ENCODE measurements at regions of chr12 and their contacts with region 1.

Region 1: GRCh38 chr12:48890657-48891418 is 25.2 kb upstream of the RND1 start:
- DNase-seq: peak; percentile 86
- ATAC-seq: peak; percentile 97
- H3K4me3 Mint-ChIP-seq: no peak overlapping the region
- H3K27ac Mint-ChIP-seq: no peak overlapping the region
- H3K4me1 Mint-ChIP-seq: no peaks in the 10 kb centered on the region
- H3K27me3 Mint-ChIP-seq: peaks cover 7% of the 10 kb centered on the region
- CTCF ChIP-seq: peak; percentile 98

Region 2: DNA sequence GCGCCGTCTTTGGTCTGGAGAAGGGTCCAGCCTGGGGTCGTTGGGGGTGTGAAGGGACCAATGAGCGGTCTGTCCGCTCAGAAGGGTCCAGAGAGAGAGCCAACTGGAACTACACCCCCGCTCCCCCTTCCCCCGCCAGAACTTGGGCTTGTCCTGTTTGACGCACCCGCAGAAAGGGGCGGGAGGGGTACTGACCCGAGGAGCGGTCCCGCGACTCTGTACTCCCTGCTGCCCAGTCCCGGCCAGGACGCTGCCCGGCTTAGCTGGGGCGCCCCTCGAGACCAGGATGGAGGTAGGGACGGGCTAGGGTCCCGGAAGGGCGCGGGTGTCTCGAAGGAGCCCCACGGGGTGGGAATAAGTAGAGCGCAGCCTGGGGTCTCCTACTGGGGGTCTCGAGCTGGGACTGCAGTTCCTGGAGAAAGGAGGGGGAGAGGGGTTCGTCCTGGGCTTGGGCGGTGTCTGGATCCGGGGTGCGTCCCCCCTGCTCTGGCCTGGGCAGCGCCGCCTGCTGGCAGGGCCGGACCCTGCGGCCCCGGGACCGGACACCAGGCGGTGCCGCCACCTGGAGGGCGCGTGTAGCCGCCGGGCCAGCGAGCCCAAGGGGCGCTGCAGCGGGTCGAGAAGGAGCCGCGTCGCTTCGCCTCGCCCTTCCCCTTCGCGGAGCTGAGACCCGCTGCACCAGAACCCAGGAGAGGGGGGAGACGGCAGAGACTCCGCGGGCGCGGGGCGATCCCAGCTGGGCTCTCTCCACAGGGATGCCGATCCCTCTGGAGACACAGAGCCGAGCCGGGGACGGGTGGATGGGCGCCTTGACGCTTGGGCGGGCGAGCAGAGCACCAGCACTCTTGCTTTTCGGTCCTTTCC is 76.3 kb before region 1 on chr12:
- CTCF ChIA-PET with region 1: interaction called, 27 read pairs
- POLR2A ChIA-PET with region 1: no interaction called
- intact Hi-C with region 1: no loop called
- DNase-seq: peak; percentile 86
- ATAC-seq: peak; percentile 83
- H3K4me3 Mint-ChIP-seq: peak overlapping the region; percentile 95
- H3K27ac Mint-ChIP-seq: peak overlapping the region; percentile 67
- H3K4me1 Mint-ChIP-seq: peaks cover 34% of the 10 kb centered on the region
- H3K27me3 Mint-ChIP-seq: peaks cover 19% of the 10 kb centered on the region
- CTCF ChIP-seq: peak; percentile 100

Region 3: GRCh38 chr12:48865434-48866290 is 25.2 kb before region 1 on chr12 and contains the start of gene RND1:
- CTCF ChIA-PET with region 1: interaction called, 294 read pairs
- POLR2A ChIA-PET with region 1: interaction called, 3 read pairs
- intact Hi-C with region 1: no loop called
- DNase-seq: peak; percentile 91
- ATAC-seq: peak; percentile 94
- H3K4me3 Mint-ChIP-seq: peak within 1 kb of the TSS; percentile 84
- H3K27ac Mint-ChIP-seq: peak within 1 kb of the TSS; percentile 79
- H3K4me1 Mint-ChIP-seq: peaks cover 21% of the 10 kb centered on the region
- H3K27me3 Mint-ChIP-seq: peaks cover 24% of the 10 kb centered on the region
- CTCF ChIP-seq: no peak
- total RNA-seq, gene RND1: 2.3 to 3.2 TPM

Region 4: GRCh38 chr12:48903982-48904411 is 13.2 kb after region 1 on chr12:
- CTCF ChIA-PET with region 1: interaction called, 80 read pairs
- POLR2A ChIA-PET with region 1: interaction called, 3 read pairs
- intact Hi-C with region 1: no loop called
- DNase-seq: peak; percentile 91
- ATAC-seq: peak; percentile 98
- H3K4me3 Mint-ChIP-seq: peak overlapping the region; percentile 58
- H3K27ac Mint-ChIP-seq: no peak overlapping the region
- H3K4me1 Mint-ChIP-seq: peaks cover 7% of the 10 kb centered on the region
- H3K27me3 Mint-ChIP-seq: no peaks in the 10 kb centered on the region
- CTCF ChIP-seq: peak; percentile 79

Region 5: GRCh38 chr12:48924617-48925303 is 33.9 kb after region 1 on chr12:
- CTCF ChIA-PET with region 1: interaction called, 18 read pairs
- POLR2A ChIA-PET with region 1: interaction called, 4 read pairs
- intact Hi-C with region 1: no loop called
- DNase-seq: peak; percentile 87
- ATAC-seq: peak; percentile 76
- H3K4me3 Mint-ChIP-seq: peak overlapping the region; percentile 88
- H3K27ac Mint-ChIP-seq: peak overlapping the region; percentile 96
- H3K4me1 Mint-ChIP-seq: peaks cover 48% of the 10 kb centered on the region
- H3K27me3 Mint-ChIP-seq: no peaks in the 10 kb centered on the region
- CTCF ChIP-seq: peak; percentile 85

Region 6: GRCh38 chr12:48957141-48958048 is 66.6 kb after region 1 on chr12 and contains the start of gene ARF3:
- CTCF ChIA-PET with region 1: interaction called, 14 read pairs
- POLR2A ChIA-PET with region 1: no interaction called
- intact Hi-C with region 1: no loop called
- DNase-seq: peak; percentile 94
- ATAC-seq: peak; percentile 96
- H3K4me3 Mint-ChIP-seq: peak within 1 kb of the TSS; percentile 96
- H3K27ac Mint-ChIP-seq: peak within 1 kb of the TSS; percentile 87
- H3K4me1 Mint-ChIP-seq: peaks cover 25% of the 10 kb centered on the region
- H3K27me3 Mint-ChIP-seq: peaks cover 7% of the 10 kb centered on the region
- CTCF ChIP-seq: no peak
- total RNA-seq, gene ARF3: 58.3 to 67.6 TPM

Measured in activated CD8-positive, alpha-beta T cell treated with anti-CD3 and anti-CD28 coated beads for 36 hours (primary cell).